HEK293T (cell line): ENCODE measurements at regions of chr7 and their contacts with region 1.

Region 1: GRCh38 chr7:41940760-41941343 is 238.0 kb upstream of the INHBA start:
- DNase-seq: peak; percentile 74

Region 2: DNA sequence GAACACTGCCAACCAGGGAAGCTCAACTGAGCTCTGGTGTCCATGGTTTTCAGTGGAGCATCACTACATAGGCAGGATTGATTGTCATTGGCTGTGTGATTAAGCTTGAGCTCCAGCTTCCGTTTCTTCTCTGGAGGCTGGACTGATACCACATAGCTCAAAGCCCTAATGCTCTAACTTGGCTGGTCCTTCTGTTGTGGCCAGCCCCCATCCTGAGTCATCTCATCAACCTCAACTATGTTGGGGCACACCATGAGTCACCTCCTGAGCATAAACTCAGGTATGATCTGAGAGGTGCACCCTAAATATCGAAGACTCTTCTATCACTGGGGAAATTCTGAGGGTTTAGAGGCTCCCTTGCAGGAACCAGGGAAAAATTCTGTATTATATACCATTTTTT is 123.5 kb before region 1 on chr7:
- CTCF ChIA-PET with region 1: no interaction called
- POLR2A ChIA-PET with region 1: no interaction called
- DNase-seq: no peak

Region 3: DNA sequence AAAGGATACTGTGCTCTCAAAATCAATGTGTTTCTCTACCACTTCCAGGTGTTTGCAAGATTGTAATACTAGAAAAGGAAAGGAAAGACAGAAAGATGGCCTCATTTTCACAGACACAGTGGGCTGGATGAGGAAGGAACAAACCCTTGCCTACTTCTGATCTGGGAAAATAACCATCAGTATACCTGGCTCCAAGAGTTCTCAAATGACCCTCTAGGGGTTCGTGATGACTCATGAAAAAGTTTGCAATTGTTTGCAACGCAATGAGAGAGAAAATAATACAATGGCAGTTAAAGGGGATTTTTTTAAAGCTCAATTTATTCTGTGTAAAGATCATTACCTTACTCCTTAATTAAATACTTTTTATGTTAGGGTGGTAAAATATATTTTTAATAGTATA is 40.3 kb before region 1 on chr7:
- CTCF ChIA-PET with region 1: no interaction called
- POLR2A ChIA-PET with region 1: no interaction called
- DNase-seq: no peak

Region 4: DNA sequence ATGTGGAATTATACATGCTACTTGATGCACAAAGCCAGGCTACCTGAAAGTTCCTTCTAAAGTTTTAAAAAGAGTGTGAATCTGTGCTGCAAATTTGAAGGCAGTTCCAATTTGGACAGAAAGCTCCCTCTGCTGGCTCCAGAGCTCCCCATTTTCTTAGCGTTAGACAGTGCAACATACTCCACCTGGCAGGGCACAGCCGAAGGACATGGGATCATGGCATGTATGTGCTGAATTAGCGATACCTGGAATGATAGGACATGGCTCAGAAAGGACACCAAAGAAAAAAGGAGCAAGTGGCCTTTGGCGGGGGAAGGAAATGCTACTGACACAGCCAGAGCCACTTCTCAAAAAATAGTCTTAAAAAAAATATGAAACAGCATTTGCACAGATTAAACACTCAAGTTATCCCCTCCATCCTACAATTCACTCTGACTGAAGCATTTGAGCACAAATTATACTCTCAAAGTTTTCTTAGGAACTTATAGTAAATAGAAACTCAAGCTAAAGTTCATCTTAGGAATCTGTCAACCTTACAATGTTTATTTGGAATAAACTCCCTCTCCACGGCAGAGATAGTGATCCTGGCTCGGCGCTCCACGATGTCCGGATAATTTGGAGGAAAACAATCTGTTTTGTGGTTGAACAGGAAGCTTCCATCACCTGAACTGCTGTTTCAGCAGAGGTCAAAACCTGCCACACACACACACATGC is 891.0 kb after region 1 on chr7:
- CTCF ChIA-PET with region 1: interaction called, 15 read pairs
- POLR2A ChIA-PET with region 1: no interaction called
- DNase-seq: peak; percentile 56

Region 5: DNA sequence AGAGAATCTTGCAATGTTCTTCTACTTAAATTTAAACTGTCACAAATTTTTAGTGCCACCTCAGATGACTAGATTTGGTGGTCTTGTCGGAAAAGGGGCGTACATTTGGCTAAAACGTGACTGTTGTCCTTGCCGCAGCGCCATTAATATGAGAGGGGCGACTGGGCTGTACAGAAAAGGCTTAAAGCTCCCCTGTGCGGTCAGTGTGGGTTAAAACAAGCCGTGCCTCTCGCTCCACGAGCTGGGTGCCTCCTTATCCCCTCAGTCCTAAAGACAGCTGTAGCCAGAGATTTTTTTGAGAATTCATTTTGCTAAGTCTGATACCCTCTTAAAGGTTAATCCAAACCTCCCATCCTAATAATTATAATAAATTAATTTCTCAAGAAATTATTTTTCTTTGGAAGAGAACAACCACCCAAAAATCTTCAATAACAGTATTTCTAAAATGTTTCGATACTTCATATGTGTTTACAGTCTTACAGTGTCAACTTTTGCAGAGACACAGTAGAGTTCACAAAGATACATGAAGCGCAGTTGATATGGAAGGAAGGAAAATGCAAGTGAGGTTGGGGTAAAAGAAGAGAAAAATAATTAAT is 902.5 kb after region 1 on chr7:
- CTCF ChIA-PET with region 1: interaction called, 13 read pairs
- POLR2A ChIA-PET with region 1: no interaction called
- DNase-seq: peak; percentile 74

Region 6: GRCh38 chr7:42876182-42877068 is 935.6 kb after region 1 on chr7:
- CTCF ChIA-PET with region 1: interaction called, 14 read pairs
- POLR2A ChIA-PET with region 1: no interaction called
- DNase-seq: peak; percentile 65